H1 (cell line): ENCODE measurements at regions of chr9 and their contacts with region 1.

Region 1: GRCh38 chr9:6353851-6354686 is 25.9 kb downstream of the TPD52L3 start:
- DNase-seq: peak; percentile 0 to 51
- H3K4me3 ChIP-seq: no peak overlapping the region
- H3K27ac ChIP-seq: no peak overlapping the region
- H3K4me1 ChIP-seq: no peaks in the 10 kb centered on the region
- H3K27me3 ChIP-seq: no peaks in the 10 kb centered on the region
- CTCF ChIP-seq: peak in 2 of 3 experiments; percentile 56 to 69; a peak in 3 of 4 replicates
- EP300 ChIP-seq: no peak
- POLR2A ChIP-seq: no peak
- RAD21 ChIP-seq: peak; percentile 85

Region 2: DNA sequence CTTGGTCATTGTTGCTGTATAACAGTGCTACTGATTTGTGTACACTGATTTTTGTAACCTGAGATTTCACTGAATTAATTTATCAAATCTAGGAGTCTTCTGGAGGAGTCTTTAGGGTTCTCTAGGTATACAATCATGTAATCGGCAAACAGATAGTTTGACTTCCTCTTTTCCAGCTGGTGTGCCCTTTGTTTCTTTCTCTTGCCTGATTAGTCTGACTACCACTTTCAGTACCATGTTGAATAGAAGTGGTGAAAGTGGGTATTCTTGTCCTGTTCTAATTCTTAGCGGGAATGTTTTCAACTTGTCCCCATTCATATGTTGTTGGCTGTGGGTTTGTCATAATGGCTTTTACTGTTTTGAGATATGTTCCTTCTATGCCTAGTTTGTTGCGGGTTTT is 314.0 kb before region 1 on chr9:
- CTCF ChIA-PET with region 1: no interaction called
- POLR2A ChIA-PET with region 1: no interaction called
- DNase-seq: no peak
- H3K4me3 ChIP-seq: no peak overlapping the region
- H3K27ac ChIP-seq: no peak overlapping the region
- H3K4me1 ChIP-seq: no peaks in the 10 kb centered on the region
- H3K27me3 ChIP-seq: no peaks in the 10 kb centered on the region
- CTCF ChIP-seq: no peak
- EP300 ChIP-seq: no peak
- POLR2A ChIP-seq: no peak
- RAD21 ChIP-seq: no peak

Region 3: DNA sequence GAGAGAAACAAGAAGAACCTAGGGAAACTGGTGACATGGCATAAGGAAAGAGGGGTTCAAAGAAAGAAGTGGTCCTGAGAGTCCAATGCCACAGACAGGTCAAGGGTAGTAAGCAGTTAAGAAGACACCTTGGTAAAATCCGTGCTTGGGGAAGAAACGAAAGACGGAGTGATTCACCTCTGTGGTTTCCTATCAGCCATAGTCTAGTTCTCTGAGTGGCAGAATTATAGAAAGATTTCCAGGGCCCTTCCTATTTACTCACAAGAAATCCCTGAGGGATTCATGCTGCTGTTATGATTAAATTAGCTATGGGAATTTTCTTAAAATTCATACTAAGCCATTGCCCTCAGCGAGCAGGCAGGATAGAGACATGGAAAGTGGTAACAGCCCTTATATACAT is 106.8 kb before region 1 on chr9:
- CTCF ChIA-PET with region 1: no interaction called
- POLR2A ChIA-PET with region 1: no interaction called
- DNase-seq: no peak
- H3K4me3 ChIP-seq: no peak overlapping the region
- H3K27ac ChIP-seq: no peak overlapping the region
- H3K4me1 ChIP-seq: no peaks in the 10 kb centered on the region
- H3K27me3 ChIP-seq: no peaks in the 10 kb centered on the region; a peak in 1 of 7 replicates
- CTCF ChIP-seq: no peak
- EP300 ChIP-seq: no peak
- POLR2A ChIP-seq: no peak
- RAD21 ChIP-seq: no peak

Region 4: DNA sequence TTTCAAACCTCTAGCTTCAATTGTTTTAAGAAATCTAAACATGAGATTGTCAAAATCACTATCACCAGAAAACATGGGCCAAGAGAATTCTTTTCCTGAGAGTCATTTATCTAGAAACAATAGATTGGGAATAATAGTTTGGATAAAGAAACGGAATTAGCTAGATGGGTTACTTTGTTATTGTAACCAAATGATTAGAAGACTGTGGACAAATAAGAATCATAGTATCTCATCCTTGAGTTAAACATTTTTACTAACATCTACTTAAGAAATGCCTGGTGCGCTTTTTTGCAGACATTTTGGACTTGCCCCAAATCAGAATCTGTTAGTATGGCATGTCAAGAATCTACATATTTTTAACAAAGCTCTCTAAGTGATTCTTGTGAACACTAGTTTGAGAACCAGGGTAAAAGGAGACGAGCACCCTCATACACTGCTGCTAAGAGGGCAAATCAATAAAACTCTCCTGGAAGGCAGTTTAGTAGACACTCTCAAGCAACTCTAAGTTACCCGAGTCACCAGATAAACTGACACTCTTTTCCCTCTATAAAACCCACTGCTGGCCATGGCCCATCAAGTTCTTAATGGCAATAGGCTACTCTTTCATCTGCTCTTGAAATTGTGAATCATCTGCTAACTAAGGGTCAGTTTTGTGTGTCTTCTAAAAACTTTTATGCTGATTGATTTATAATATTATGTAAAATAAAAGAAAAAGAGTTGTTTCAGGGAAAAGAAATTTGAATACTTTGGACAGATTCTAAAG is 13.2 kb after region 1 on chr9:
- CTCF ChIA-PET with region 1: interaction called, 16 read pairs
- POLR2A ChIA-PET with region 1: no interaction called
- DNase-seq: no peak
- H3K4me3 ChIP-seq: no peak overlapping the region
- H3K27ac ChIP-seq: no peak overlapping the region
- H3K4me1 ChIP-seq: no peaks in the 10 kb centered on the region
- H3K27me3 ChIP-seq: no peaks in the 10 kb centered on the region
- CTCF ChIP-seq: no peak
- EP300 ChIP-seq: no peak
- POLR2A ChIP-seq: no peak
- RAD21 ChIP-seq: no peak

Region 5: DNA sequence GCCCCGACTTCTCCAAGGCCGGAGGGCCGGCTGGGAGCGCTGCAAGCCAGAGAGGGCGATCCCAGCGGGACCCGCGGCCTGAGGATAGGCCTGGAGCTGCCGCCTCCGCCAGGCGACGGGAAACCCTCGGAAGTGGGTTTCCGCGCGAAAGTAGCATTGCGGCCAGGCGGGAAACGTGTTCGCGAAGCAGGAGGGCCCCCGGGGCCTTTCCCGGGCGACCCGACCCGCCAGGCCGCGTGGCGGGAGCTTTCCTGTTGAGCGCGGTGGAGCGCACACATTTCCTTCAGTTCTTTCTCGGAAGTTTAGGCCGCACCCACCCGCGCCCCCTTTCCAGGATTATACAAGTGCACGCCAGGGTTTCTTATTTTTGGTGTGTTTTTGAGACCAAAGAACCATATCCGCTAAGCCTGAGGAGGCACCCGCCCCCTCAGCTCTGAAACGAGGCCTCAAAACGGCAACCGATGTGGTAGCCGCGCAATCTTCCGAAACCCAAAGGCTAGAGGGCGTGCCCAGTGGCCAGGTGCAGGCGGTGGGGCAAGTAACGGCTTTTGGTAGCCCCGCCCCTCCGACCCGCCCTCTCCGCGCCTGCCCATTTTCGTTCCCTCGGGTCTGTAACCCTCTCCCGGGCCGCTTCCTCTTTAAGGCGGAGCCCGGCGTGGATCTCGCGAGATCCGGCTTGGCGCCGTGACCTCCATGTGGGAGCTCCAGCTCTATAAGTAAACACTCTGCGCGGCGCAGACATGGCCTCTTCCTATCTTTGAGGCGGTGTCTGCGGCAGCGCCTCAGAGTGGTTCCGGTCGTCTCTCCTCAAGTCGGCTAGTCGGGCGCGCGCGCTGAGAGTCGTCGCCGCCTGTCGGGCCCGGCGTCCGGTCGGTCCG is 58.7 kb after region 1 on chr9 and contains the start of gene UHRF2:
- CTCF ChIA-PET with region 1: interaction called, 10 read pairs
- POLR2A ChIA-PET with region 1: interaction called, 6 read pairs
- DNase-seq: peak; percentile 95 to 97
- H3K4me3 ChIP-seq: peak within 1 kb of the TSS; percentile 90 to 97 (median 94)
- H3K27ac ChIP-seq: peak within 1 kb of the TSS; percentile 88
- H3K4me1 ChIP-seq: peaks cover 0 to 7% (median 5%) of the 10 kb centered on the region in 4 experiments; a peak in 3 of 7 replicates
- H3K27me3 ChIP-seq: peaks cover 0 to 6% (median 0%) of the 10 kb centered on the region in 4 experiments; a peak in 2 of 7 replicates
- CTCF ChIP-seq: no peak
- EP300 ChIP-seq: peak in 1 of 2 experiments; percentile 45; a peak in 1 of 3 replicates
- POLR2A ChIP-seq: peak; percentile 82 to 98
- RAD21 ChIP-seq: no peak
- total RNA-seq, gene UHRF2: 42.5 and 48.0 TPM in 2 replicates

Region 6: DNA sequence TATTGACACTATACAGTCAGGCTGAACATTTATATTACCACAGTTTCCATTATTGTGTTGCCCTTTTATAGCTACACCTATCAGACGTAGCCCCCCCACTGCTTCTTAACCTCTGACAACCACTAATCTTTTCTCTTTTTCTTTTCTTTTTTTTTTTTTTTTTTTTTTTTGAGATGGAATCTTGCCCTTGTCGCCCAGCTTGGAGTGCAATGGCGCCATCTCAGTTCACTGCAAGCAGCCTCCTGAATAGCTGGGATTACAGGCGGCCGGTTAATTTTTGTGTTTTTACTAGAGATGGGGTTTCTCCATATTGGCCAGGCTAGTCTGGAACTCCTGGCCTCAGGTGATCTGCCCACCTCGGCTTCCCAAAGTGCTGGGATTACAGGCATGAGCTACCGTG is 134.3 kb after region 1 on chr9:
- CTCF ChIA-PET with region 1: interaction called, 10 read pairs
- POLR2A ChIA-PET with region 1: no interaction called
- DNase-seq: no peak
- H3K4me3 ChIP-seq: no peak overlapping the region
- H3K27ac ChIP-seq: no peak overlapping the region
- H3K4me1 ChIP-seq: no peaks in the 10 kb centered on the region
- H3K27me3 ChIP-seq: no peaks in the 10 kb centered on the region
- CTCF ChIP-seq: peak; percentile 8 to 33 (median 17)
- EP300 ChIP-seq: no peak
- POLR2A ChIP-seq: no peak
- RAD21 ChIP-seq: peak; percentile 38 to 46

Region 7: DNA sequence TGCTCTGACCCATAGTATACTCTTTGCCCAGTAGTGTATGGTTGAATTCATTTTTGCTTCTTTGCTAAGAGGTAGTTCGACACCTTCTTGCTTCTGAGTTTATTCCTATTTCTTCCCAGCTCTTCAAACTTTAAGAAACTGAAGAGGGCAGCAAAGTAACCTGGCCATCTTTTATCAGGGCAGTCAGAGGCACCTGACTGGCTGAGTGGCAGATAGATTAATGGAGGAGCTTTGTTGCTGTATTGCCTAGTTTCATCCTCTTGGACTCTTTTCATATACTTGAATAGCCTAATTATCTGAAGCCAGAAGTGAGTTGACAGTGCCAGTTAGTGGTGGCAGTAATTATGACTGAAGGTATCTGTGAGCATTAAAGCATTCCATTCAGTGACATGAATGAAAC is 141.4 kb after region 1 on chr9:
- CTCF ChIA-PET with region 1: interaction called, 11 read pairs
- POLR2A ChIA-PET with region 1: no interaction called
- DNase-seq: no peak
- H3K4me3 ChIP-seq: no peak overlapping the region
- H3K27ac ChIP-seq: no peak overlapping the region
- H3K4me1 ChIP-seq: no peaks in the 10 kb centered on the region
- H3K27me3 ChIP-seq: no peaks in the 10 kb centered on the region
- CTCF ChIP-seq: no peak; a peak in 1 of 4 replicates
- EP300 ChIP-seq: no peak
- POLR2A ChIP-seq: no peak
- RAD21 ChIP-seq: no peak